ENCODE measurements at regions of chr7 and their contacts with region 1.

Region 1: DNA sequence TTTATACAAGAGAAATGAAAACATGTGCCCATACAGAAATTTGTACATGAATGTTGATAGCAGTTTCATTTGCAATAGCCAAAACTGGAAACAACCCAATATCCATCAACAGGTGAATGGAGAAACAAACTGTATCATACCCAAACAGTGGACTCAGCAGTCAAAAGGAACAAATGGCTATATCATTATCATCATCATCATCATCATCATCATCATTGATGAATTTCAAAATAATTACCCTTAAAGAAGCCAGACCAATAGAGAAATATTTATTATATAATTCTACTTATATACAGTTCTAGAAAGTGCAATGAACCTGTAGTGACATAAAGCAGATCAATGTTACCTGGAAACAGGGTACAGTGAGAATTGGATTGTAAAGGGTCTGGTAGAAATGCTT is 112.5 kb downstream of the PPP1R9A start:
- DNase-seq: no peak

Region 2: GRCh38 chr7:93828260-93828659 is 1191.6 kb before region 1 on chr7:
- intact Hi-C with region 1: loop called in 1 of 2 experiments (anchors 5 kb)
- DNase-seq: no peak

Region 3: GRCh38 chr7:94503097-94503496 is 516.8 kb before region 1 on chr7:
- intact Hi-C with region 1: no loop called
- DNase-seq: no peak